Activated CD8-positive, alpha-beta T cell treated with anti-CD3 and anti-CD28 coated beads for 36 hours (primary cell): ENCODE measurements at regions of chr2 and their contacts with region 1.

Region 1: GRCh38 chr2:38581193-38582147 is 21.3 kb downstream of the HNRNPLL start:
- DNase-seq: peak; percentile 58
- ATAC-seq: peak; percentile 85
- H3K4me3 Mint-ChIP-seq: no peak overlapping the region
- H3K27ac Mint-ChIP-seq: peak overlapping the region; percentile 27
- H3K4me1 Mint-ChIP-seq: peaks cover 21% of the 10 kb centered on the region
- H3K27me3 Mint-ChIP-seq: no peaks in the 10 kb centered on the region
- CTCF ChIP-seq: peak; percentile 80

Region 2: GRCh38 chr2:38535744-38536506 is 45.5 kb before region 1 on chr2:
- CTCF ChIA-PET with region 1: interaction called, 22 read pairs
- POLR2A ChIA-PET with region 1: no interaction called
- intact Hi-C with region 1: no loop called
- DNase-seq: peak; percentile 87
- ATAC-seq: peak; percentile 96
- H3K4me3 Mint-ChIP-seq: peak overlapping the region; percentile 50
- H3K27ac Mint-ChIP-seq: no peak overlapping the region
- H3K4me1 Mint-ChIP-seq: no peaks in the 10 kb centered on the region
- H3K27me3 Mint-ChIP-seq: peaks cover 3% of the 10 kb centered on the region
- CTCF ChIP-seq: peak; percentile 96

Region 3: GRCh38 chr2:38596229-38596628 is 14.8 kb after region 1 on chr2:
- CTCF ChIA-PET with region 1: interaction called, 168 read pairs
- POLR2A ChIA-PET with region 1: interaction called, 6 read pairs
- intact Hi-C with region 1: no loop called
- DNase-seq: no peak
- ATAC-seq: no peak
- H3K4me3 Mint-ChIP-seq: peak overlapping the region; percentile 50
- H3K27ac Mint-ChIP-seq: peak overlapping the region; percentile 69
- H3K4me1 Mint-ChIP-seq: peaks cover 61% of the 10 kb centered on the region
- H3K27me3 Mint-ChIP-seq: no peaks in the 10 kb centered on the region
- CTCF ChIP-seq: no peak

Region 4: GRCh38 chr2:38665854-38666555 is 84.5 kb after region 1 on chr2 and contains the start of gene GALM:
- CTCF ChIA-PET with region 1: interaction called, 22 read pairs
- POLR2A ChIA-PET with region 1: interaction called, 6 read pairs
- intact Hi-C with region 1: no loop called
- DNase-seq: peak; percentile 74
- ATAC-seq: peak; percentile 37
- H3K4me3 Mint-ChIP-seq: peak within 1 kb of the TSS; percentile 79
- H3K27ac Mint-ChIP-seq: peak within 1 kb of the TSS; percentile 98
- H3K4me1 Mint-ChIP-seq: peaks cover 59% of the 10 kb centered on the region
- H3K27me3 Mint-ChIP-seq: no peaks in the 10 kb centered on the region
- CTCF ChIP-seq: no peak
- total RNA-seq, gene GALM: 38.3 to 40.6 TPM

Region 5: DNA sequence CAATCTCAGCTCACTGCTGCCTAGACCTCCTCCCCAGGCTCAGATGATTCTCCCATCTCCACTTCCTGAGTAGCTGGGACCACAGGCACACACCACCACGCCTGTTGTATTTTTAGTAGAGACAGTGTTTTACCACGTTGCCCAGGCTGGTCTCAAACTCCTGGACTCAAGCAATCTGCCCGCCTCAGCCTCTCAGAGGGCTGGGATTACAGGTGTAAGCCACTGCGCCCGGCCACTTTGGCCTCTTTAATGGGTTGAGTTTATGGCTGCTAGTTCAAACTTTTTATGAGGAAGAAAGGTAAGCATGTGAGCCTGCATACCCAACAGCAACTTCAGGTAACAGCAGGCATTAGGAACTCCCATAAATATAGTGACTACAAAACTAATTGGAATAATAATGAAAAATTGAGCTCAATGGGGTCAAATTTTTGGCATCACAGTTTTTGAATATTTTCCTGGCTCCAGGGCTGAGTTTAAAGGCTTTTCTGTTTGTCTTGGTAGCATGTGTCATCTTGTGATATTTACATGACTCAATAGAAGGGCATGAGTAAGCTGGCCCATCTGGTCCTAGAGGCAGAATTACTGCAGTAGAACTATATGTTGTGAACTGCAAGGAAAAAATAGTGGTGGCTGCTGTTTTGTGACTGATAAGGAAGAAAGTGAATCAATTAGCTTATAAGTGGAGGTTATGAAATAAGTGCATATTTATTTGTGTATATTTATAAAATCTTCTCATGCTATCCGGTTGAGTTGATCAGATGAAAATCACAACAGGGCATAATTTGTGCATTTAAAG is 109.2 kb after region 1 on chr2:
- CTCF ChIA-PET with region 1: interaction called, 11 read pairs
- POLR2A ChIA-PET with region 1: no interaction called
- intact Hi-C with region 1: no loop called
- DNase-seq: no peak
- ATAC-seq: peak; percentile 95
- H3K4me3 Mint-ChIP-seq: no peak overlapping the region
- H3K27ac Mint-ChIP-seq: peak overlapping the region; percentile 64
- H3K4me1 Mint-ChIP-seq: peaks cover 48% of the 10 kb centered on the region
- H3K27me3 Mint-ChIP-seq: no peaks in the 10 kb centered on the region
- CTCF ChIP-seq: no peak

Region 6: GRCh38 chr2:38720613-38721241 is 139.3 kb after region 1 on chr2:
- CTCF ChIA-PET with region 1: interaction called, 133 read pairs
- POLR2A ChIA-PET with region 1: no interaction called
- intact Hi-C with region 1: loop called (anchors 1 kb)
- DNase-seq: peak; percentile 42
- ATAC-seq: no peak
- H3K4me3 Mint-ChIP-seq: peak overlapping the region; percentile 39
- H3K27ac Mint-ChIP-seq: peak overlapping the region; percentile 92
- H3K4me1 Mint-ChIP-seq: peaks cover 62% of the 10 kb centered on the region
- H3K27me3 Mint-ChIP-seq: no peaks in the 10 kb centered on the region
- CTCF ChIP-seq: no peak